Activated CD4-positive, alpha-beta T cell treated with anti-CD3 and anti-CD28 coated beads, Interleukin-2, amount 10 ng/mL, durations not matched to agents 24 days and 14 days (primary cell): ENCODE measurements at regions of chr15 and their contacts with region 1.

Region 1: DNA sequence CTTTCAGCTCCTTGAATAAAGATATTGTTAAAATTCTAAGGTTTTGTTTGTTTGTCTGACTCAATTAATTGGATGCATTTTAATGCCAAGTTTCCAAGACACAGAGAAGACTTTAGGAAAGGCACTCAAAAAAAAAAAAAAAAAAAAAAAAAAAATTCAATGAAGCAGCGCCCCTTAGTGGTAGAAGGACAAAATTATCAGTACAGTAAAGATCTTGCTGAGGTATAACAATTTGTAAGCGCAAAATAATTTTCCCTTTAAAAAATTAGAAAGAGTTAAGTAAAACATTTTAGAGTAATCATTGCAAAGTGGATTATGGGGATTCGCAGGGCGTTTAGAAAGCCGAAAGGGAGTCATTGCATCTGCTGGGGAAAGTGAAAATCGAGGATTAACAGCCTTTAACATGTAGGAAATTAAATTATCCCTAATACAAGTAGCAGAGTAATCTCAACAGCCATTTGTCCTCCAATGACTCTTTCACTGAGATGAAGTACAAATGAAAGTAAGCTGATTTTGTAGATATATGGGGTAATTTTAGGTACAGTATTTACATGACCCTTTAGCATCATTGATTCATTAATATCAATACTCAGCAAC is 5.8 kb upstream of the DIS3L start:
- DNase-seq: no peak
- H3K4me3 Mint-ChIP-seq: no peak overlapping the region
- H3K27ac Mint-ChIP-seq: no peak overlapping the region
- H3K4me1 Mint-ChIP-seq: peaks cover 21% of the 10 kb centered on the region
- H3K27me3 Mint-ChIP-seq: peaks cover 7% of the 10 kb centered on the region

Region 2: DNA sequence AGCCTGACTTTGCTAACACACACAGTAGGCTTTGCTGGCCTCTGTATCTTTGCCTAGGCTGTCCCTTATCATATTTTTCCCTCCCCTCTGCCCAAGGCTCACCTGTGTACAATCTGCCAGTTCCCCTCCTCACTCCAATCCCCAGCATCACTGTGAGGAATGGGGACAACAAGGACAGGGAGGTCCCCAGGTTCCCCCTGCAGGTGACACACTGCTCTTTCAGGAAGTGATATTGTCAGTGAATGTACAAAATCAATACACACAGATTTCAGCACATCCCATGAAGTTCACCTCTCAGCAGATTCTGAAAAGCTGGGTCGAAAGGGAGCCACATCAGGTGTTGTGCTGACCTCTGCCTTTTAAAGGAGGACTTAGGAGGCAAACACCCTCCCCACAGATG is 240.8 kb before region 1 on chr15:
- intact Hi-C with region 1: no loop called
- DNase-seq: no peak
- H3K4me3 Mint-ChIP-seq: no peak overlapping the region
- H3K27ac Mint-ChIP-seq: no peak overlapping the region
- H3K4me1 Mint-ChIP-seq: no peaks in the 10 kb centered on the region
- H3K27me3 Mint-ChIP-seq: peaks cover 7% of the 10 kb centered on the region

Region 3: DNA sequence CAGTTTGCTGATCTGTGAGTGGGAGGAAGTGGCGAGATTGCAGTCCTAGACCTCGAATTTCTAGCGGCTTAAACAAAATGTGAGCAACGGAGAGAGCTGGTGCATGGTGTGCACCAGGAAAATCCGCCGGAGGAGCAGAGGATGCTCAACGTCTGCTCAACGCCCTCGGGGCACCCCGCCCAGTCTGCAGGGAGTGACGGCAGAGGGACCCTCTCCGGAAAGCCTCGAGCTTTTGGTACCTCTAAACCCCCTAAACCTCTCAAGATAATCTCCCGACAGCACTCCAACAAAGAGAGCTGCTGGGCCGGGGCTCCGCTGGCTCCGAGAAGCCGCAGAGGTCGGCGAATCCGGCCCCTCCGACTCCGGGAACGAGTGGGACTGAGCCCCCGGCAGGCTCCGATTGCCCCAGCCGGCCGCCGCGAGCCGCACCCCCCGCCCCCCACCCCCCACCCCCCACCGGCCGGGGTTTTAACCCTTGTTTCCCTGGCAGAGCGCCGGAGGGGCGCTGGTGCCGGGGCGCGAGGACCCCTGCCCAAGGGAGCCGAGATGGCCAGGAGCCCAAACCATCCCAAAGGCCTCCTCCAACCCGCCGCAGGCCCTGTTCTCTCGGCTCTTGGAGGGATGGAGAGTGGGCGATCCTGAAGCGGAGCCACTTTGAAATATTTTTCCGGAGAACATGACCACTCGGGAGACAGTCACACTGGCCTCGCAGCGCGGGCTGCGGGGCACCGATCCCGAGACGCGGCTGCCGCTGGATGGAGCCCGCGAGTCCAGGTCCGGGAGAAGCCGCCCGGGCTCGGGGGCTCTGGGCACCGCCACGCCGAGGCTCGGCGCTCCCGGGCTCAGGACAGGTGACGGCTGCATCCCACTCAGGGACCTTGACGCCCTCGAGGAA is 35.5 kb before region 1 on chr15:
- intact Hi-C with region 1: loop called (anchors 2 kb)
- DNase-seq: peak; percentile 85
- H3K4me3 Mint-ChIP-seq: peak overlapping the region; percentile 77
- H3K27ac Mint-ChIP-seq: no peak overlapping the region
- H3K4me1 Mint-ChIP-seq: peaks cover 17% of the 10 kb centered on the region
- H3K27me3 Mint-ChIP-seq: peaks cover 85% of the 10 kb centered on the region